Mammary epithelial cell (primary cell): ENCODE measurements at regions of chr11 and their contacts with region 1.

Region 1: DNA sequence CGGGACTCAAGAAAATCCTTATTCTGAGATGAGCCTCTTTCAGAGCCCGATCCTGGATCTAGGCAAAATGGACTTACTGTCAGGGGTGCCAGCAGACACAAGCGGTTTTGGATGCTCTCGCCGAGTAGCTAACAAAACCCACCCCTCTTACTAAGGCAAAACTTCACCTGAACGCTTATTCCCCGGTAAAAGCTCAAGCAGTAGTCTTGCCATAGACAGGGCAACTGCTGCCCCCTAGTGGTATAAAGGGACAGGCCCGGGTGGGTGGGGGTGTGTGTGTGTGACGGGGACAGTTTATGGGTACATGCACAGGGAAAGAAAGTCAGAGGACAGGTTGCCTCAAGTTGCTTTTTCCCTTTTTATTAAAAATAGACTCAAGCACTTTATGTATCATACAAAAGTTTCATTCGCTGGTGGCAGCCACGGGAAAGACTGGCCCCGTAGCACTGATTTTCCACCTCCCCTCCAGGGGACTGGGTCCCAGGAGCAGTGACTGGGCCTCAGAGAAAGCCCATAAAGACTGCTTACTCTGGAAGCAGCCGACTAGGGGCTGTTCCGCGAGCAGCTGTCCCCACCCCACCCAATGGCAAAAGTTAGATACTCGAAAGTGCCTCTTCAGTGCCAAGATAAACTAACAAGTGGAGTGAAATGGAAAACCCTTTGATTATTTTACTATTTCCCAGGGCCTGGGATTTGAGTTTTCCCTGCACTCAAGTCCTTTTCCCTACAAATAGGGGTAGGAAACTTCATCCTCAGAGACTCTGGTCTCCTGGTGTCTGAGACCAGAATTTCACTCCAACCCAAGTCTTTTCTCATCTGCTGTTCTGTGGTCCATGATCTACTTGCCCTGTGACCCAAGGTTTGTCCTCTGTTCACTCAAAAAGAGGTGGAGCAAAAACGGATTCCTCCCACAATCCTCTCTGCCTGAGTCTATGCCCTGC is 4.7 kb downstream of the YPEL4 start:
- DNase-seq: no peak
- H3K4me3 ChIP-seq: no peak overlapping the region
- H3K27ac ChIP-seq: no peak overlapping the region
- H3K4me1 ChIP-seq: peaks cover 49% of the 10 kb centered on the region
- H3K27me3 ChIP-seq: no peaks in the 10 kb centered on the region
- CTCF ChIP-seq: peak; percentile 63 to 86

Region 2: GRCh38 chr11:57480409-57481137 is 164.4 kb before region 1 on chr11:
- CTCF ChIA-PET with region 1: interaction called, 5 read pairs
- dilution Hi-C with region 1: no loop called
- in situ Hi-C with region 1: no loop called
- intact Hi-C with region 1: loop called (anchors 5 kb)
- DNase-seq: peak; percentile 28
- H3K4me3 ChIP-seq: no peak overlapping the region
- H3K27ac ChIP-seq: no peak overlapping the region
- H3K4me1 ChIP-seq: peaks cover 19% of the 10 kb centered on the region
- H3K27me3 ChIP-seq: peaks cover 25% of the 10 kb centered on the region
- CTCF ChIP-seq: peak; percentile 72 to 79

Region 3: DNA sequence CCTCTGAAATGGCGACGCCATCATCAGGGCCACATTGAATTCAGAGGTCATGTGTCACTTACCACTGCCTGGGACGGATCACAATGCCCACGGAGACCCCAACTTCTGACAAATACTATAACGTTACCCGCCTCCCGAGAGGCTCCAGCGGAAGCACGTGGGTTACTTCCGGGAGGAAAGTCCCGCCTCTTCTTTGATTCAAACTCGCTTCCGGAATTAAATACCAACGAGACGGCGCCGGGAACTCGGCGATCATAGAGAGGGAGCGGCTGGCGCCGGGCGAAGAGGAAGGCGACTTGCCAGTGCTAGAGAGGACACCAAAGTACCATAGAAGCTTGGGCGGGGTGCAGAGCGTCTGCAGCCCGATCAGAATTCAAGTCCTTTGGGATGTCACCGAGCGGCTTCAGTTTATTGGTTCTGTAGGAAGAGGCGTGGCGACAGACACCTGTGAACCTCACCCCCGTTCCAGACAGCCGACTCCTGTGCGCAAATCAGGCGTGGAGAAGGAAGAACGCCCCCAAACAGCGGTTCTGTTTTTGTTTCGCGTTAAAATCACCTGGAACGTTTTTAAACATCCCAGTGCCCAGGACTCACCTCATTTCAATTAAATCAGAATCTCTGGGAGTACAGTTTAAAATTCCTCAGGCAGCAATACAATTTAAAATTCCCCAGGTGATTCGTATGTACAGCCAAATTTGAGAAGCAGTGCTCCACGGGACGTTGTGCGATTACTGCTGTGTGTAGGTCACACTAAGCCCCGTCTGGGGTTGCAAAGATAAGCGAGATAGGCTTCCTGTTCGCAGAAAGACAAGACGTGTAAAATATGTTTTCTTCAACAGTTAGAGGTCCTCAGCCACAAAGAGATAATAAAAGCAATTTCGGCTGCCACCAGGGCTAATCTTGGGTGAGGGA is 114.2 kb before region 1 on chr11 and contains the start of gene TIMM10:
- CTCF ChIA-PET with region 1: no interaction called
- dilution Hi-C with region 1: no loop called
- in situ Hi-C with region 1: no loop called
- intact Hi-C with region 1: loop called (anchors 2 kb)
- DNase-seq: peak; percentile 99
- H3K4me3 ChIP-seq: peak within 1 kb of the TSS; percentile 55 to 77 (median 75)
- H3K27ac ChIP-seq: peak within 1 kb of the TSS; percentile 65
- H3K4me1 ChIP-seq: peaks cover 21% of the 10 kb centered on the region
- H3K27me3 ChIP-seq: no peaks in the 10 kb centered on the region
- CTCF ChIP-seq: no peak
- total RNA-seq, gene TIMM10: 24.8 to 58.9 TPM

Region 4: GRCh38 chr11:57567515-57568329 is 77.3 kb before region 1 on chr11 and contains the start of gene UBE2L6:
- CTCF ChIA-PET with region 1: interaction called, 36 read pairs
- dilution Hi-C with region 1: no loop called
- in situ Hi-C with region 1: loop called in 1 of 2 experiments (anchors 5 kb)
- intact Hi-C with region 1: loop called (anchors 1 kb)
- DNase-seq: no peak
- H3K4me3 ChIP-seq: peak within 1 kb of the TSS; percentile 77 to 96 (median 90)
- H3K27ac ChIP-seq: peak within 1 kb of the TSS; percentile 44
- H3K4me1 ChIP-seq: peaks cover 27% of the 10 kb centered on the region
- H3K27me3 ChIP-seq: no peaks in the 10 kb centered on the region
- CTCF ChIP-seq: no peak
- total RNA-seq, gene UBE2L6: 34.2 to 46.8 TPM